Lower leg skin (tissue), 4 donors: ENCODE measurements at regions of chr17 and their contacts with region 1.

Region 1: DNA sequence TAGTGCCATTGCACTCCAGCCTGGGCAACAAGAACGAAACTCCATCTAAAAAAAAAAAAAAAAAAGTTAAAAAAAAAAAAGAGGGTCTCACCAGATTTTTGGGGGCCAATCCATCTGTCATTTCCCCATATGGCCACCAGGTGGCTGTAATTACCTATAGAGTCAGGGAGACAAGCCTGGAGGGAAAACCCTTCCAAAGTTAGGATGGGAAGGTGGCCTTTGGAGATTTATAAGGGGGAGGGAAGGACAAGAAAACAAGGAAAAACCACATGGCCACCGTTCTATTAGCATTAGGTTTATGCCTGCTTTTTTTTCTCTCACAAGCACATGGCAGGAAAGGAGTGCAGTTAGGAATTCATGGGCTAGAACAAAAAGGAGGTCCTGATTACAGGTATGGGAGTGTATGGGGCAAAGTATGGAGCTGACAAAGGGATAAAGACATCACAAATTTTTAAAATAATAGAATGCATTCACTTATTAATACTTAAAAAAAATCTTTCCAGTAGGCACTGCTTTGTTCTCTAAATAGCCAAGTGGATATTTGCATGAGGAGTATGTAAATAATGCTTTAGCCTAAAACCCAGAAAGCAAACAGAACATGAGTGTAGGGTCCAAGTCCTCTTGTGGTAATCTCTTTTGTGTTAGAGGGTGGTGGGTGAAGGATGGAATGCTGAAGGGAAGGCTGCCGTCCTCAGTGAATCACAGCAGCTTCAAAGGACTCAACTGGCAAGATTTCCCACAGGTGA is 5.1 kb downstream of the CYB5D1 start:
- DNase-seq: peak in 1 of 2 donors; percentile 81
- H3K4me3 ChIP-seq: no peak overlapping the region
- CTCF ChIP-seq: peak in 1 of 3 donors; percentile 67
- POLR2A ChIP-seq: no peak

Region 2: GRCh38 chr17:7897773-7898172 is 34.9 kb after region 1 on chr17:
- intact Hi-C with region 1: loop called (anchors 5 kb)
- DNase-seq: peak in 1 of 2 donors; percentile 67
- H3K4me3 ChIP-seq: no peak overlapping the region
- CTCF ChIP-seq: no peak
- POLR2A ChIP-seq: no peak

Region 3: DNA sequence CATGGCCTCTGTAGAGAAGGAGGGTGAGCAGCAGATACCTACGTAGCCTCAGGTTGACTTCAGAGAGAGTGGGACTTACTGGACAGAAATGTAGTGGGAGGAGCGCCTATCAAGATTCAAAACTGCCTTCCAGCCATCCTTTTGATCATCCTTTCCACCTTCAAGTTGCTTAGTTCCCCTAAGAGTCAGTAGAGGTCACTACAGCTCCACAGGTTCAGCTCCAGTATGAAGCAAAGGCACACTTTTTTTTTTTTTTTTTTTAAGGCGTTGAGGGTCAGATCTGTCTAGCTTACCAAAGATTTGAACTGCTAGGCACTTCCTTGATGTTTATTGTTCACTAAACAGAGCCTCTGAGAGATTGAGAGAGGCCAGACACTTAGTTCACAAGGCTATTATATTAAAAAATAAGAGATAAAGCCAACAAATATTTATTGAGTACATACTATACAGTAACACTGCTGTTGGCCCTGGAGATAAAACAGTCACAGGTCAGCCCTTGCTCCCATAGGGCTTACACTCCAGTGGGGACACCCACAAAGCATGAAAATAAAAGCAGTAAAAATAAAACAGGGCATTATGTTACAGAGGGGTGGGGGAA is 50.2 kb after region 1 on chr17:
- intact Hi-C with region 1: loop called (anchors 5 kb)
- DNase-seq: peak in 1 of 2 donors; percentile 46
- H3K4me3 ChIP-seq: no peak overlapping the region
- CTCF ChIP-seq: peak in 1 of 3 donors; percentile 34
- POLR2A ChIP-seq: no peak